CD8-positive, alpha-beta T cell (primary cell): ENCODE measurements at regions of chr2 and their contacts with region 1.

Region 1: DNA sequence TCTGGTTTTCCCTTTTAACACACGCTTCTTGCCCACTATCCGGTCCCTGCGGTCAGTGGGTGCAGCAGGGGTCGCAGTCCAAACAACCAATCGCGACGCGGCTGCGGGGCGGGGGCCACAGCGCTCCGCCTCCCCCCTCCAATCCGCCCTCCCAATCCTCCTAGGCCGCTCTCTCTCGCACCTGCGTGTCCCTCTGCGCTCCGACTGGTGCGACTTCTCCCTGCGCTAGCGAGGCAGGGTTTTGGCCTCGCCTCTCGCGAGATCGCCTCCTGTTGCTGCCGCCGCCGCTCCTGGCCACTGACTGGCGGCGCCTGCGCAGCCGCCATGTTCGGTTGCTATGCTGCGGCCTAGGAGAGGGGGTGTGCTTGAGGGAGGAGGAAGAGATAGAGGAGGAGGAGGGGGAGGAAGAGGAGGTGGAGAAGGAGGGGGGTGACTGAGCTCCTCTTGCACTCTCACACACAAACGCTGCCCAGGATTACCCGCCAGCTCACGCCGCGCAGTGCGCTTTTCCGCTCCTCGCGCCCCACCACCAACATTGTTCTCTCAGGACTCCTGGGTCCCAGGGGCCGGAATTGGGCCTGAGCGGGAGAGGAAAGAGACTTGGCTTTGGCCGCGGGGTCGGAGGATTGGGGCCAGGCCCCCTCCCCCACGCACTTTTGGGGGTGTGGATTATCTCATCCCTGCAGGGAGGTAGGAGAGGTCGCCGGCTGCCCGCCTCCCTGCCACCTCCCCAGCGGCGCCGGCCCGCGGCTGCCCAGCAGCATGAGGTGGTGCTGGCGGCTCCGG is at the start of gene PTPN4:
- DNase-seq: peak; percentile 91 to 99 (median 95)
- ATAC-seq: peak; percentile 90
- H3K4me3 ChIP-seq: peak within 1 kb of the TSS; percentile 83
- H3K4me3 Mint-ChIP-seq: peak within 1 kb of the TSS; percentile 95
- H3K27ac ChIP-seq: peak within 1 kb of the TSS; percentile 77 to 79
- H3K27ac Mint-ChIP-seq: peak within 1 kb of the TSS; percentile 96
- H3K4me1 ChIP-seq: peaks cover 31% of the 10 kb centered on the region
- H3K4me1 Mint-ChIP-seq: peaks cover 42% of the 10 kb centered on the region
- H3K27me3 ChIP-seq: no peaks in the 10 kb centered on the region
- H3K27me3 Mint-ChIP-seq: no peaks in the 10 kb centered on the region
- CTCF ChIP-seq: no peak
- total RNA-seq, gene PTPN4: 104 to 105 TPM

Region 2: GRCh38 chr2:118013724-118014491 is 1745.7 kb before region 1 on chr2 and contains the start of gene CCDC93:
- CTCF ChIA-PET with region 1: no interaction called
- POLR2A ChIA-PET with region 1: no interaction called
- intact Hi-C with region 1: loop called (anchors 5 to 10 kb)
- DNase-seq: peak; percentile 73 to 94 (median 86)
- ATAC-seq: peak; percentile 85
- H3K4me3 ChIP-seq: peak within 1 kb of the TSS; percentile 73 to 88
- H3K4me3 Mint-ChIP-seq: peak within 1 kb of the TSS; percentile 95
- H3K27ac ChIP-seq: peak within 1 kb of the TSS; percentile 93 to 95
- H3K27ac Mint-ChIP-seq: peak within 1 kb of the TSS; percentile 92
- H3K4me1 ChIP-seq: peaks cover 27% of the 10 kb centered on the region
- H3K4me1 Mint-ChIP-seq: peaks cover 47% of the 10 kb centered on the region
- H3K27me3 ChIP-seq: no peaks in the 10 kb centered on the region
- H3K27me3 Mint-ChIP-seq: peaks cover 3% of the 10 kb centered on the region
- CTCF ChIP-seq: no peak
- total RNA-seq, gene CCDC93: 84.4 to 85.3 TPM

Region 3: GRCh38 chr2:119713804-119714490 is 45.7 kb before region 1 on chr2:
- CTCF ChIA-PET with region 1: no interaction called
- POLR2A ChIA-PET with region 1: no interaction called
- intact Hi-C with region 1: no loop called
- DNase-seq: no peak
- ATAC-seq: no peak
- H3K4me3 ChIP-seq: no peak overlapping the region
- H3K4me3 Mint-ChIP-seq: no peak overlapping the region
- H3K27ac ChIP-seq: no peak overlapping the region
- H3K27ac Mint-ChIP-seq: no peak overlapping the region
- H3K4me1 ChIP-seq: no peaks in the 10 kb centered on the region
- H3K4me1 Mint-ChIP-seq: no peaks in the 10 kb centered on the region
- H3K27me3 ChIP-seq: no peaks in the 10 kb centered on the region
- H3K27me3 Mint-ChIP-seq: no peaks in the 10 kb centered on the region
- CTCF ChIP-seq: no peak

Region 4: GRCh38 chr2:119772128-119772527 is 12.5 kb after region 1 on chr2:
- CTCF ChIA-PET with region 1: interaction called, 3 read pairs
- POLR2A ChIA-PET with region 1: interaction called, 7 read pairs
- intact Hi-C with region 1: loop called in 1 of 2 experiments (anchors 1 kb)
- DNase-seq: no peak
- ATAC-seq: no peak
- H3K4me3 ChIP-seq: no peak overlapping the region
- H3K4me3 Mint-ChIP-seq: no peak overlapping the region
- H3K27ac ChIP-seq: no peak overlapping the region
- H3K27ac Mint-ChIP-seq: no peak overlapping the region
- H3K4me1 ChIP-seq: peaks cover 41% of the 10 kb centered on the region
- H3K4me1 Mint-ChIP-seq: peaks cover 44% of the 10 kb centered on the region
- H3K27me3 ChIP-seq: no peaks in the 10 kb centered on the region
- H3K27me3 Mint-ChIP-seq: no peaks in the 10 kb centered on the region
- CTCF ChIP-seq: no peak

Region 5: GRCh38 chr2:119929537-119929936 is 169.9 kb after region 1 on chr2:
- CTCF ChIA-PET with region 1: no interaction called
- POLR2A ChIA-PET with region 1: interaction called, 8 read pairs
- intact Hi-C with region 1: loop called (anchors 2 to 5 kb)
- DNase-seq: peak in 6 of 9 experiments; percentile 15 to 83 (median 26)
- ATAC-seq: peak; percentile 91
- H3K4me3 ChIP-seq: peak overlapping the region; percentile 48 to 63
- H3K4me3 Mint-ChIP-seq: peak overlapping the region; percentile 75
- H3K27ac ChIP-seq: peak overlapping the region; percentile 60 to 70
- H3K27ac Mint-ChIP-seq: peak overlapping the region; percentile 97
- H3K4me1 ChIP-seq: peaks cover 70% of the 10 kb centered on the region
- H3K4me1 Mint-ChIP-seq: peaks cover 73% of the 10 kb centered on the region
- H3K27me3 ChIP-seq: no peaks in the 10 kb centered on the region
- H3K27me3 Mint-ChIP-seq: no peaks in the 10 kb centered on the region
- CTCF ChIP-seq: no peak

Region 6: DNA sequence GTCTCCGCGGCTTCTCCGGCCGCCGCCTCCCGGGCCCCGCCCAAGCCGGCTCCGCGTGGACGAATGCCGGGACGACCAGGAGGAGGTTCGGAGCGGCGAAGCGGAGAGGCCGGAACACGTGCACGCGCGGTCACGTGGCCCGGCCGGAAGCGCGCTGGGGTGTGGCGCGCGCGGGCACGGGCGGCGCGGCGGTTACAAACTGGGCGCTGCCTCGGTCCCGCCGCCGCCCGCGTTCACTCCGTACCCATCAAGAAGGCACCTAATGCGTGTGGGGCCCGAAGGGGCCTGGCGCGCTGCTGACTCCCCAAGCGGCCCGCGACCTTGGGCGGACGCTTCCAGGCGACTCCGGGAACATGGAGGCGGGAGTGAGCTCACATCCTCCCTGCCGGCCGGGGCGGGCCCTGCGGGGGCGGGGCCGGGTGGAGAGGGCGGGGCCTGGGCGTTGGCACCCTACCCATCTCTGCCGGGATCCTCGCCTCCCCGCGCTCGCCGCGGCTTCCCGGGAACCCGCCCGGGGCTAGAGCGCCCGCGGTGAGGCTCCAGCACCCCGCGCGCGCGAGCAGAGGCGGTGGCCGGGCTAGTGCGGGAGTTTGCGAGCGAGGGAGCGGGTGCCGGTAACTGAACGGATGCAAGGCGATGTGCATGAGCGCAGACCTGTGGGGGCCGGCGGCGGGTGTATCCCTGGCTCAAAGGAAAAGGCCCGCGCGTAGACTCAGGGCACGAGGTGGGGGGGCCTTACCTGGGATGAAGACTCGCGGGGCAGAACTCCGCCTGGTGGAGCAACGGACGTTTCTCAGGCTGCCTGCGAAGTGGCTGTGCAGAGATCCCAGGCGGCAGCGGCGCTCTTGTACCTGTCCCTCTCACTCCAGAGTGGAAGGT is 463.6 kb after region 1 on chr2 and contains the start of gene TMEM185B:
- CTCF ChIA-PET with region 1: interaction called, 4 read pairs
- POLR2A ChIA-PET with region 1: interaction called, 4 read pairs
- intact Hi-C with region 1: loop called (anchors 1 kb)
- DNase-seq: peak; percentile 81 to 91 (median 87)
- ATAC-seq: peak; percentile 95
- H3K4me3 ChIP-seq: peak within 1 kb of the TSS; percentile 80 to 87
- H3K4me3 Mint-ChIP-seq: peak within 1 kb of the TSS; percentile 87
- H3K27ac ChIP-seq: peak within 1 kb of the TSS; percentile 90 to 95
- H3K27ac Mint-ChIP-seq: peak within 1 kb of the TSS; percentile 93
- H3K4me1 ChIP-seq: peaks cover 36% of the 10 kb centered on the region
- H3K4me1 Mint-ChIP-seq: peaks cover 60% of the 10 kb centered on the region
- H3K27me3 ChIP-seq: no peaks in the 10 kb centered on the region
- H3K27me3 Mint-ChIP-seq: no peaks in the 10 kb centered on the region
- CTCF ChIP-seq: no peak
- total RNA-seq, gene TMEM185B: 21.3 to 23.5 TPM

Region 7: GRCh38 chr2:121736462-121737341 is 1977.1 kb after region 1 on chr2 and contains the start of gene NIFK:
- CTCF ChIA-PET with region 1: no interaction called
- POLR2A ChIA-PET with region 1: no interaction called
- intact Hi-C with region 1: loop called (anchors 10 kb)
- DNase-seq: peak; percentile 99 to 100 (median 100)
- ATAC-seq: peak; percentile 90
- H3K4me3 ChIP-seq: peak within 1 kb of the TSS; percentile 78 to 96
- H3K4me3 Mint-ChIP-seq: peak within 1 kb of the TSS; percentile 96
- H3K27ac ChIP-seq: peak within 1 kb of the TSS; percentile 83 to 88
- H3K27ac Mint-ChIP-seq: peak within 1 kb of the TSS; percentile 97
- H3K4me1 ChIP-seq: peaks cover 32% of the 10 kb centered on the region
- H3K4me1 Mint-ChIP-seq: peaks cover 46% of the 10 kb centered on the region
- H3K27me3 ChIP-seq: no peaks in the 10 kb centered on the region
- H3K27me3 Mint-ChIP-seq: no peaks in the 10 kb centered on the region
- CTCF ChIP-seq: no peak
- total RNA-seq, gene NIFK: 43.0 to 49.6 TPM